Activated CD4-positive, alpha-beta memory T cell treated with anti-CD3 and anti-CD28 coated beads, Interleukin-2, amount 10 ng/mL, durations not matched to agents 7 days and 5 days (primary cell): ENCODE measurements at regions of chr7 and their contacts with region 1.

Region 1: DNA sequence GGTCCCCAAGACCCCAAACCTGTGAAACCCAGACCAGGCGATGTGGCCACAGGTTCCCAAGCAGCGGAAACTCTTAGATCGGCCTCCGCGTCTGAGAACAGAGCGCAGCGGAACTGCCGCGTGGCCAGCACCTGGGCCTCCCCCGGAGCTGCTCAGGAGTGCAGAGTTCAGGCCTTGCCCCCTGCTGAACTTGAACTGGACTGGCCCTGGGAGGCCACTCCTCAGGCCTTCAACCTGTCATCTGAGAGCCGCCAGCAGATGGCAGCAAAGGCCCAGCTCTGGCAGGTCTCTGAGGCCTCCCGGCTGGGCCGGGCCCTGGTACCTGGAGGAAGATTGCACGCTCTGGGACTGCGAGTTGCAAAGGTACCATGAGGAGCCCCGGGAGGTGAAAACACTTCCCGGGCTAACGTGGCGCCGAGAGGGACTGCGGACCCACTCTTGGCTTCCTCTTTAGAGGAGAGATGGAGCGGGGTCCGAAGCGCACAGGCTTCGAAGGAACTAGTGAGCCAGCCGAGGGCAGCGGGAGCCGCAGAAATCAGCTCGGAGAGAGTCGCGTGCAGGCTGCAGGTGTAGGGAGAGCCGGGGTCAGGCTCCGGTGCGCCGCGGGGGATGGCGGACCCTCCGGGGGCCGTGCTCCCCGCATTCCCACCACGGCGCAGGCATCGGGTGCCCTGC is 89.1 kb downstream of the PAXIP1 start:
- DNase-seq: peak; percentile 86
- H3K4me3 Mint-ChIP-seq: peak overlapping the region; percentile 17
- H3K27ac Mint-ChIP-seq: no peak overlapping the region
- H3K4me1 Mint-ChIP-seq: peaks cover 5% of the 10 kb centered on the region
- H3K27me3 Mint-ChIP-seq: peaks cover 12% of the 10 kb centered on the region

Region 2: GRCh38 chr7:154953006-154953684 is 39.4 kb after region 1 on chr7:
- CTCF ChIA-PET with region 1: interaction called, 17 read pairs
- POLR2A ChIA-PET with region 1: no interaction called
- DNase-seq: peak; percentile 63
- H3K4me3 Mint-ChIP-seq: no peak overlapping the region
- H3K27ac Mint-ChIP-seq: no peak overlapping the region
- H3K4me1 Mint-ChIP-seq: no peaks in the 10 kb centered on the region
- H3K27me3 Mint-ChIP-seq: no peaks in the 10 kb centered on the region